CD8-positive, alpha-beta T cell (primary cell): ENCODE measurements at regions of chr4 and their contacts with region 1.

Region 1: GRCh38 chr4:26410385-26411293 is 79.6 kb downstream of the CCKAR start:
- DNase-seq: peak in 5 of 9 experiments; percentile 4 to 69 (median 31)
- ATAC-seq: no peak
- H3K4me3 ChIP-seq: no peak overlapping the region
- H3K4me3 Mint-ChIP-seq: no peak overlapping the region
- H3K27ac ChIP-seq: no peak overlapping the region
- H3K27ac Mint-ChIP-seq: no peak overlapping the region
- H3K4me1 ChIP-seq: no peaks in the 10 kb centered on the region
- H3K4me1 Mint-ChIP-seq: no peaks in the 10 kb centered on the region
- H3K27me3 ChIP-seq: no peaks in the 10 kb centered on the region
- H3K27me3 Mint-ChIP-seq: no peaks in the 10 kb centered on the region
- CTCF ChIP-seq: peak; percentile 76

Region 2: GRCh38 chr4:25439918-25440477 is 970.6 kb before region 1 on chr4:
- CTCF ChIA-PET with region 1: no interaction called
- POLR2A ChIA-PET with region 1: no interaction called
- intact Hi-C with region 1: loop called in 1 of 2 experiments (anchors 1 kb)
- DNase-seq: peak in 7 of 9 experiments; percentile 21 to 66 (median 43)
- ATAC-seq: peak; percentile 49
- H3K4me3 ChIP-seq: no peak overlapping the region
- H3K4me3 Mint-ChIP-seq: no peak overlapping the region
- H3K27ac ChIP-seq: no peak overlapping the region
- H3K27ac Mint-ChIP-seq: no peak overlapping the region
- H3K4me1 ChIP-seq: no peaks in the 10 kb centered on the region
- H3K4me1 Mint-ChIP-seq: no peaks in the 10 kb centered on the region
- H3K27me3 ChIP-seq: no peaks in the 10 kb centered on the region
- H3K27me3 Mint-ChIP-seq: no peaks in the 10 kb centered on the region
- CTCF ChIP-seq: peak; percentile 70

Region 3: GRCh38 chr4:25928379-25929297 is 482.0 kb before region 1 on chr4:
- CTCF ChIA-PET with region 1: no interaction called
- POLR2A ChIA-PET with region 1: no interaction called
- intact Hi-C with region 1: loop called in 1 of 2 experiments (anchors 2 kb)
- DNase-seq: no peak
- ATAC-seq: no peak
- H3K4me3 ChIP-seq: no peak overlapping the region
- H3K4me3 Mint-ChIP-seq: no peak overlapping the region
- H3K27ac ChIP-seq: no peak overlapping the region
- H3K27ac Mint-ChIP-seq: peak overlapping the region; percentile 27
- H3K4me1 ChIP-seq: no peaks in the 10 kb centered on the region
- H3K4me1 Mint-ChIP-seq: peaks cover 5% of the 10 kb centered on the region
- H3K27me3 ChIP-seq: no peaks in the 10 kb centered on the region
- H3K27me3 Mint-ChIP-seq: no peaks in the 10 kb centered on the region
- CTCF ChIP-seq: no peak

Region 4: DNA sequence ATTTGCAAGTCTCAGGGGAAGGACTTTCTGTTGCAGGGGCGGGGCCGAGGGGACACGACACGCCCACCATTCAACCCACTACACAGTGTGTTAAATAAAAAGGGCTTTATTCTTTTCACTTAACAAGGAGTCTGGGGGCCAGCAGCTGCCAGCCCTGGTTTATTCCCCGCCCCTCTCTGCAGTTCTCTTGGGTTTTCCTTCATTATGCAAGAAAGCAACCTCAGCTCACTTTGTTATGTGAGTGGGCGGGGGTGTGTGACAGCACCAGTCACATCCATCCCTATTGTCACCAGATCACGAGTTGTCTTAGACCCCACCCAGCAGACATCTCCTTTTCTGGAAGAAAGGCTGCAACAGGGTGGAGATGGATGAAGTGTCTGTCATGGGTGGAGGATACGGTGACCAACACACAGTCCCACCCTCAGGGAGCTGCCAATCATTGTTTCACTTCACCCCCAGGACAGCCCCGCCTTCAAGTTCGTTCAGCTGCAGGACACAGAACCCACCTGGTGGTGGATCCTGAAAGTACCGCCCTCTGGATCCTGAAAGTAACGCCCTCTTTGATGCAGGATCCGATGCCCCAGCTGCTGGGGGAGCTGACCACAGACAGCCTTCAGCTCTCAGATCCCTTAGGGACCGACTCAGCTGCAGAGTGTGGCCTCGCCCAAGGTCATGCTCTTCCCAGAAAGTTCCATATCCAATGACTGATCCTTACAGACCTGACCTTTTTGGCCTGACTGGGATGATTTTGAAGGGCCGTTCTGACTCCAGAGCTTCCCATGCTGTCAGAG is 417.0 kb before region 1 on chr4:
- CTCF ChIA-PET with region 1: interaction called, 42 read pairs
- POLR2A ChIA-PET with region 1: no interaction called
- intact Hi-C with region 1: loop called (anchors 1 kb)
- DNase-seq: peak in 2 of 9 experiments; percentile 8 to 20
- ATAC-seq: no peak
- H3K4me3 ChIP-seq: no peak overlapping the region
- H3K4me3 Mint-ChIP-seq: no peak overlapping the region
- H3K27ac ChIP-seq: no peak overlapping the region
- H3K27ac Mint-ChIP-seq: no peak overlapping the region
- H3K4me1 ChIP-seq: no peaks in the 10 kb centered on the region
- H3K4me1 Mint-ChIP-seq: peaks cover 3% of the 10 kb centered on the region
- H3K27me3 ChIP-seq: peaks cover 0 to 2% of the 10 kb centered on the region in 2 experiments
- H3K27me3 Mint-ChIP-seq: no peaks in the 10 kb centered on the region
- CTCF ChIP-seq: no peak

Region 5: GRCh38 chr4:26081795-26082498 is 328.7 kb before region 1 on chr4:
- CTCF ChIA-PET with region 1: interaction called, 17 read pairs
- POLR2A ChIA-PET with region 1: no interaction called
- intact Hi-C with region 1: loop called (anchors 1 kb)
- DNase-seq: peak in 2 of 9 experiments; percentile 58 to 66
- ATAC-seq: no peak
- H3K4me3 ChIP-seq: no peak overlapping the region
- H3K4me3 Mint-ChIP-seq: no peak overlapping the region
- H3K27ac ChIP-seq: no peak overlapping the region
- H3K27ac Mint-ChIP-seq: no peak overlapping the region
- H3K4me1 ChIP-seq: no peaks in the 10 kb centered on the region
- H3K4me1 Mint-ChIP-seq: peaks cover 4% of the 10 kb centered on the region
- H3K27me3 ChIP-seq: no peaks in the 10 kb centered on the region
- H3K27me3 Mint-ChIP-seq: peaks cover 17% of the 10 kb centered on the region
- CTCF ChIP-seq: peak; percentile 53

Region 6: GRCh38 chr4:26330186-26330787 is 80.4 kb before region 1 on chr4:
- CTCF ChIA-PET with region 1: interaction called, 107 read pairs
- POLR2A ChIA-PET with region 1: no interaction called
- intact Hi-C with region 1: loop called (anchors 1 kb)
- DNase-seq: peak in 3 of 9 experiments; percentile 16 to 73 (median 64)
- ATAC-seq: peak; percentile 86
- H3K4me3 ChIP-seq: no peak overlapping the region
- H3K4me3 Mint-ChIP-seq: no peak overlapping the region
- H3K27ac ChIP-seq: no peak overlapping the region
- H3K27ac Mint-ChIP-seq: no peak overlapping the region
- H3K4me1 ChIP-seq: no peaks in the 10 kb centered on the region
- H3K4me1 Mint-ChIP-seq: peaks cover 48% of the 10 kb centered on the region
- H3K27me3 ChIP-seq: no peaks in the 10 kb centered on the region
- H3K27me3 Mint-ChIP-seq: no peaks in the 10 kb centered on the region
- CTCF ChIP-seq: peak; percentile 88

Region 7: GRCh38 chr4:26434030-26434639 is 23.5 kb after region 1 on chr4:
- CTCF ChIA-PET with region 1: no interaction called
- POLR2A ChIA-PET with region 1: no interaction called
- intact Hi-C with region 1: no loop called
- DNase-seq: no peak
- ATAC-seq: no peak
- H3K4me3 ChIP-seq: no peak overlapping the region
- H3K4me3 Mint-ChIP-seq: no peak overlapping the region
- H3K27ac ChIP-seq: no peak overlapping the region
- H3K27ac Mint-ChIP-seq: no peak overlapping the region
- H3K4me1 ChIP-seq: no peaks in the 10 kb centered on the region
- H3K4me1 Mint-ChIP-seq: no peaks in the 10 kb centered on the region
- H3K27me3 ChIP-seq: no peaks in the 10 kb centered on the region
- H3K27me3 Mint-ChIP-seq: no peaks in the 10 kb centered on the region
- CTCF ChIP-seq: no peak

Region 8: GRCh38 chr4:28296239-28296638 is 1885.6 kb after region 1 on chr4:
- CTCF ChIA-PET with region 1: no interaction called
- POLR2A ChIA-PET with region 1: no interaction called
- intact Hi-C with region 1: no loop called
- DNase-seq: no peak
- ATAC-seq: no peak
- H3K4me3 ChIP-seq: no peak overlapping the region
- H3K4me3 Mint-ChIP-seq: no peak overlapping the region
- H3K27ac ChIP-seq: no peak overlapping the region
- H3K27ac Mint-ChIP-seq: no peak overlapping the region
- H3K4me1 ChIP-seq: no peaks in the 10 kb centered on the region
- H3K4me1 Mint-ChIP-seq: no peaks in the 10 kb centered on the region
- H3K27me3 ChIP-seq: no peaks in the 10 kb centered on the region
- H3K27me3 Mint-ChIP-seq: no peaks in the 10 kb centered on the region
- CTCF ChIP-seq: no peak